CD4-positive, alpha-beta memory T cell (primary cell): ENCODE measurements at regions of chr5 and their contacts with region 1.

Region 1: DNA sequence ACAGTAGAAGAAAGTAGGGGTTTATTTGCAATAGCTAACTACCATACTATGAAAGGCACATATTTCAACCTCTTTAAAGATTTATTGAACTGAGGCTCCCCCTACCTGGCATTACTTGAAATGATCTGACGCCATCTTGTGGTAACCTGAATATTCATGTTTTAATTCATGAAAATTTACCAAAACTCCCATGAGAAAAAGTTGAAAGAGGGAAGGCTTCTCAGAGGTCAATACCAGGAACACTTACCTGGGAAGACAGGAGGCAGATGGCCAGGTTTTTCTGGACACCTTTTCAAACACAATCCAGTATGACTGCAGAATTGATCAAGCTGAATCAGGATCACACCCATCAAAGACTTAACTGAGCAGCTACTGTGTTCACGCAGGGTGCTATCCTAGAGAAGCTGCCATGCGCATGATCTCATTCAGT is 9.4 kb downstream of the PRELID2 start:
- DNase-seq: peak in 4 of 5 donors; percentile 14 to 26 (median 16)
- H3K4me3 ChIP-seq: no peak overlapping the region
- H3K4me3 Mint-ChIP-seq: no peak overlapping the region
- H3K27ac ChIP-seq: no peak overlapping the region
- H3K27ac Mint-ChIP-seq: no peak overlapping the region
- H3K4me1 ChIP-seq: no peaks in the 10 kb centered on the region
- H3K4me1 Mint-ChIP-seq: peaks cover 0 to 5% (median 2%) of the 10 kb centered on the region in 4 donors
- H3K27me3 ChIP-seq: no peaks in the 10 kb centered on the region
- H3K27me3 Mint-ChIP-seq: no peaks in the 10 kb centered on the region

Region 2: DNA sequence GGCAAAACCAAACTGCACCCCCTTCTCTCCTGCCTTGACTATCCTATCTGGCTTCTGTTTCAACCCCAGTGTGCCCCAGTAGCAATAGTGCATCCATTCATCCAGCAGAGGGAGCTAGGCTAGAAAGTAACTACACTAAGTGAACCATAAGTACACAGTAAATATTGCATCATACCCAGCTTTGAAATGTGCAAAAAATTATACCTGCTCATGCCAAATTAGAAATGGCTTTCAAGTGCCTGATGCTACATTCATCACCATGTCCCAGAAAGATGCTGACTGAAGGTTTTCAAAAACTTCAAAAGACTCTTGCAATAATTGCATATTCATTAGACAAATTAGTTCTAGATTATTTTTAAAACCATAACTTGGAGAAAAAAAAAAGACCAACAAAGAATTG is 144.1 kb before region 1 on chr5:
- CTCF ChIA-PET with region 1: no interaction called
- POLR2A ChIA-PET with region 1: no interaction called
- intact Hi-C with region 1: loop called (anchors 5 kb)
- DNase-seq: peak in 1 of 5 donors; percentile 4
- H3K4me3 ChIP-seq: no peak overlapping the region
- H3K4me3 Mint-ChIP-seq: no peak overlapping the region
- H3K27ac ChIP-seq: no peak overlapping the region
- H3K27ac Mint-ChIP-seq: no peak overlapping the region
- H3K4me1 ChIP-seq: no peaks in the 10 kb centered on the region
- H3K4me1 Mint-ChIP-seq: no peaks in the 10 kb centered on the region
- H3K27me3 ChIP-seq: no peaks in the 10 kb centered on the region
- H3K27me3 Mint-ChIP-seq: no peaks in the 10 kb centered on the region

Region 3: DNA sequence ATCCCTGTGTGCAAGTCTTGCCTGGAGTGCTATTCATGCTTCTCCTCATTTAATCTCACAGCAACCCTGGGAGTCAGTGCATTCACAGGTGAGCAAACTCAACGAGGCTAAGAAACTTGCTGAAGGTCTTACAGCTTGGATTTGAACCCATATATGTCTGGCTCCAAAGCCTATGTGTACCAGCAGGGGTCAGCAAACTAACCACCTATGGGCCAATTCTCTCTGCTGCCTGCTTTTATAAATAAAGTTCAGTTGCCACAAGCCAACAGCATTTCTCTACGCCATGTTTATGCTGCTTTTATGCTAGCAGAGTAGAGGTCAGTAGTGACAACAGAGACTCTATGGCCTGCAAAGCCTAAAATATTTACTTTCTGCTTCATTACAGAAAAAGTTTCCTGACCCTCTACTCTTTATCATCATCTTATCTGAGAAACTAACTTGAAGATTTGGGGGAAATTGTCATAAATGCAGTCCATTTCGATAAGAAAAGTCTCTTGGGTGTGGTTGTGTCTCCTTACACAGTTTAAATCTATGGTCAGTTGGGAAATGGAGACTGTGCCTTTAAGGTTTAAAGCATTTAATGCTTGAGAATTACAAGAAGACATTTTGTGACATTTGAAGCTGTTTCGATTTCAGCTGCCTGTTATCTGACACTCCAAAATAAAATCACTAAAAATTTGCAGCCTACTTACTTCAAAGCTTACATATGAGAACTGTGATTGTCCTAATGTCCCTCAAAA is 128.3 kb before region 1 on chr5:
- CTCF ChIA-PET with region 1: interaction called, 5 read pairs
- POLR2A ChIA-PET with region 1: no interaction called
- intact Hi-C with region 1: loop called (anchors 5 kb)
- DNase-seq: no peak
- H3K4me3 ChIP-seq: no peak overlapping the region
- H3K4me3 Mint-ChIP-seq: no peak overlapping the region
- H3K27ac ChIP-seq: no peak overlapping the region
- H3K27ac Mint-ChIP-seq: no peak overlapping the region
- H3K4me1 ChIP-seq: no peaks in the 10 kb centered on the region
- H3K4me1 Mint-ChIP-seq: no peaks in the 10 kb centered on the region
- H3K27me3 ChIP-seq: no peaks in the 10 kb centered on the region
- H3K27me3 Mint-ChIP-seq: no peaks in the 10 kb centered on the region